GM10248 (cell line): ENCODE measurements at regions of chr1 and their contacts with region 1.

Region 1: GRCh38 chr1:2194898-2195673 is 514 bp upstream of the FAAP20 start:
- DNase-seq: peak; percentile 88
- CTCF ChIP-seq: peak; percentile 92

Region 2: GRCh38 chr1:2205191-2205952 is 10.3 kb after region 1 on chr1:
- CTCF ChIA-PET with region 1: interaction called, 12 read pairs
- POLR2A ChIA-PET with region 1: no interaction called
- DNase-seq: no peak
- CTCF ChIP-seq: peak; percentile 10

Region 3: GRCh38 chr1:2227346-2228153 is 32.5 kb after region 1 on chr1:
- CTCF ChIA-PET with region 1: interaction called, 11 read pairs
- POLR2A ChIA-PET with region 1: no interaction called
- DNase-seq: peak; percentile 100
- CTCF ChIP-seq: peak; percentile 28

Region 4: DNA sequence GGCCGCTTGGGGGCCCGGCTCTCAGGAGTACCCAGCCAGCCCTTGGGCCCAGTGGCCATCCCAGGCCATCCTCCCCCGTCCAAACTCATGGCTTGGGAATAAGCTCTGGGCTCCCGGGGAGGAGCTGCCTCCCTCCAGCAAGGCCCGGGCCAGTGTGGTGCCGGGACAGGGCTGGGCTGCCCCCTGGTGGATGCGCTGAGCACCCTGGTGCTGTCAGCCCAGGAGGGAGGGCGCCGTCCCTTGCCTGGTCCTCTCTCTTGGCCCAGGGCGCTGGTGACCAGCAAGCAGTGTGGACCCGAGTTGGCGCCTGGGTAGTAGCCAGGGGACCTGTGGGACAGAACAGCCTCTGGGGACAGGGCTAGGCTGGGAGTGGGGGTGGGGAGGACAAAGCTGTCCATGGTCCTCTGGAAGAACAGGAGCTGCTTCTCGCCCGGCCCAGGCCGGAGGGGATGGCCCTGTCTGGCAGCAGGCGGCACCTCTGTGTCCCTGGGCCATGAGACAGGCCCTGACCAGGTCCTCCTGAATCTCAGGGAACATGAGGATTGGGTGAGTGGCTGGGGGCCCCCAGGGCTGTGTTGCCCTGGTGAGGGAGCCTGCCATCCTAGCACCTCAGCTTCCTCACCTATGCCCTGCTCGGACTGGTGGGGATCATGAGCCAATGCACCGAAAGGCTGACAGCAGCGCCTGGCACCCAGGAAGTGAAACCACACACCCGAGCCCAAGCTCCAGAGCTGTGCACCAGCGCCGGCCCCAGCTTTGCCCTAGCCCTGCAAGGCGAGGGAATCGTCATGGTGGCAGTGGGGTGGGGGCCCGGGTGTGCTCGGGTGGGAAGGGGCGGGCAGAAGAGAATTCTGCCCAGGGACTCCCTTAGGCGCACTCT is 186.9 kb after region 1 on chr1:
- CTCF ChIA-PET with region 1: interaction called, 182 read pairs
- POLR2A ChIA-PET with region 1: no interaction called
- DNase-seq: peak; percentile 92
- CTCF ChIP-seq: peak; percentile 96

Region 5: GRCh38 chr1:2391041-2391930 is 196.2 kb after region 1 on chr1 and contains the starts of genes MORN1 and RER1:
- CTCF ChIA-PET with region 1: interaction called, 19 read pairs
- POLR2A ChIA-PET with region 1: no interaction called
- DNase-seq: peak; percentile 99
- CTCF ChIP-seq: no peak

Region 6: GRCh38 chr1:2545759-2546514 is 350.9 kb after region 1 on chr1:
- CTCF ChIA-PET with region 1: interaction called, 10 read pairs
- POLR2A ChIA-PET with region 1: interaction called, 5 read pairs
- DNase-seq: peak; percentile 97
- CTCF ChIP-seq: no peak